GM12878 (cell line): ENCODE measurements at regions of chr18 and their contacts with region 1.

Region 1: GRCh38 chr18:36419905-36420531 is 122.5 kb downstream of the FHOD3 start:
- DNase-seq: no peak
- ATAC-seq: peak; percentile 94
- H3K4me3 ChIP-seq: no peak overlapping the region
- H3K27ac ChIP-seq: no peak overlapping the region
- H3K4me1 ChIP-seq: no peaks in the 10 kb centered on the region
- H3K27me3 ChIP-seq: no peaks in the 10 kb centered on the region
- CTCF ChIP-seq: peak; percentile 19 to 47 (median 31); a peak in 5 of 6 replicates
- EP300 ChIP-seq: no peak
- POLR2A ChIP-seq: no peak
- RAD21 ChIP-seq: peak; percentile 22; the same call in 1 of the 2 replicates

Region 2: GRCh38 chr18:36302676-36303075 is 117.3 kb before region 1 on chr18:
- CTCF ChIA-PET with region 1: interaction called, 5 read pairs
- POLR2A ChIA-PET with region 1: interaction called, 3 read pairs
- RAD21 ChIA-PET with region 1: interaction called, 13 read pairs
- SMC1A ChIA-PET with region 1: interaction called, 19 read pairs
- in situ Hi-C with region 1: no loop called
- intact Hi-C with region 1: no loop called
- DNase-seq: no peak
- ATAC-seq: no peak
- H3K4me3 ChIP-seq: no peak overlapping the region
- H3K27ac ChIP-seq: no peak overlapping the region
- H3K4me1 ChIP-seq: no peaks in the 10 kb centered on the region
- H3K27me3 ChIP-seq: peaks cover 0 to 6% of the 10 kb centered on the region in 2 experiments; a peak in 2 of 4 replicates
- CTCF ChIP-seq: no peak
- EP300 ChIP-seq: no peak
- POLR2A ChIP-seq: no peak
- RAD21 ChIP-seq: no peak

Region 3: GRCh38 chr18:36402765-36403396 is 17.1 kb before region 1 on chr18:
- CTCF ChIA-PET with region 1: interaction called, 107 read pairs
- POLR2A ChIA-PET with region 1: interaction called, 23 read pairs
- RAD21 ChIA-PET with region 1: interaction called, 51 read pairs
- SMC1A ChIA-PET with region 1: interaction called, 1,180 read pairs
- in situ Hi-C with region 1: no loop called
- intact Hi-C with region 1: no loop called
- DNase-seq: no peak
- ATAC-seq: peak; percentile 70
- H3K4me3 ChIP-seq: no peak overlapping the region
- H3K27ac ChIP-seq: no peak overlapping the region
- H3K4me1 ChIP-seq: no peaks in the 10 kb centered on the region
- H3K27me3 ChIP-seq: no peaks in the 10 kb centered on the region
- CTCF ChIP-seq: peak in 2 of 3 experiments; percentile 3 to 25; a peak in 3 of 6 replicates
- EP300 ChIP-seq: no peak
- POLR2A ChIP-seq: no peak
- RAD21 ChIP-seq: no peak

Region 4: GRCh38 chr18:36441426-36442240 is 21.6 kb after region 1 on chr18:
- CTCF ChIA-PET with region 1: interaction called, 83 read pairs
- POLR2A ChIA-PET with region 1: interaction called, 22 read pairs
- RAD21 ChIA-PET with region 1: interaction called, 34 read pairs
- SMC1A ChIA-PET with region 1: interaction called, 253 read pairs
- in situ Hi-C with region 1: no loop called
- intact Hi-C with region 1: no loop called
- DNase-seq: no peak
- ATAC-seq: peak; percentile 10; the same call in 2 of the 3 replicates
- H3K4me3 ChIP-seq: no peak overlapping the region
- H3K27ac ChIP-seq: no peak overlapping the region
- H3K4me1 ChIP-seq: no peaks in the 10 kb centered on the region
- H3K27me3 ChIP-seq: no peaks in the 10 kb centered on the region
- CTCF ChIP-seq: no peak
- EP300 ChIP-seq: peak in 1 of 2 experiments; percentile 16; a peak in 1 of 4 replicates
- POLR2A ChIP-seq: no peak
- RAD21 ChIP-seq: no peak

Region 5: DNA sequence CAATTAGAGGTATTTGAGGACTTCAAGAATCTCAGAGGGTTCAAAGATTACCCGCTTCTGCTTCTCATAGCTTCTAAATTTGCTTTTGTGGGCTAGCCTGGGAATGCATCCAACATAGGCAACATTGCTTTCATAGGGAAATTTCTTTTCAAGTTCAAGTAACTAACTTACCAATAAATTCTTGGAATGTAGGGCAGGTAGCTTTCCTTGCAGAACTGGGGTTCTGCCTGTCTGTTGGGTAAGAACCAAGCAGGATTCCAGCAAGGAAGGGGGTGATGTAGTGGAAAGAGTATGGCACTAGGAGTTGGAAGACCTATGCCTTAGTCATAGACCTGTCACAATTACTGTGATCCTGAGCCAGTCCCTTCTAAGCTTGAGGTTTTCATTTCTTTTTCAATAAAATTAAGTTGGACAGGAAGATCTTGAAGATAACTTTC is 41.6 kb after region 1 on chr18:
- CTCF ChIA-PET with region 1: interaction called, 8 read pairs
- POLR2A ChIA-PET with region 1: interaction called, 3 read pairs
- RAD21 ChIA-PET with region 1: interaction called, 10 read pairs
- SMC1A ChIA-PET with region 1: interaction called, 15 read pairs
- in situ Hi-C with region 1: no loop called
- intact Hi-C with region 1: no loop called
- DNase-seq: no peak
- ATAC-seq: no peak
- H3K4me3 ChIP-seq: no peak overlapping the region
- H3K27ac ChIP-seq: no peak overlapping the region
- H3K4me1 ChIP-seq: no peaks in the 10 kb centered on the region
- H3K27me3 ChIP-seq: no peaks in the 10 kb centered on the region
- CTCF ChIP-seq: no peak
- EP300 ChIP-seq: no peak
- POLR2A ChIP-seq: no peak
- RAD21 ChIP-seq: no peak

Region 6: GRCh38 chr18:36661999-36662398 is 242.0 kb after region 1 on chr18:
- CTCF ChIA-PET with region 1: no interaction called
- POLR2A ChIA-PET with region 1: no interaction called
- RAD21 ChIA-PET with region 1: no interaction called
- SMC1A ChIA-PET with region 1: no interaction called
- in situ Hi-C with region 1: no loop called
- intact Hi-C with region 1: loop called (anchors 10 kb)
- DNase-seq: no peak
- ATAC-seq: peak; percentile 58
- H3K4me3 ChIP-seq: no peak overlapping the region
- H3K27ac ChIP-seq: no peak overlapping the region
- H3K4me1 ChIP-seq: no peaks in the 10 kb centered on the region
- H3K27me3 ChIP-seq: no peaks in the 10 kb centered on the region
- CTCF ChIP-seq: peak; percentile 35 to 47 (median 43); a peak in 4 of 6 replicates
- EP300 ChIP-seq: no peak
- POLR2A ChIP-seq: no peak
- RAD21 ChIP-seq: peak; percentile 78